SK-N-SH (cell line): ENCODE measurements at regions of chr1 and their contacts with region 1.

Region 1: DNA sequence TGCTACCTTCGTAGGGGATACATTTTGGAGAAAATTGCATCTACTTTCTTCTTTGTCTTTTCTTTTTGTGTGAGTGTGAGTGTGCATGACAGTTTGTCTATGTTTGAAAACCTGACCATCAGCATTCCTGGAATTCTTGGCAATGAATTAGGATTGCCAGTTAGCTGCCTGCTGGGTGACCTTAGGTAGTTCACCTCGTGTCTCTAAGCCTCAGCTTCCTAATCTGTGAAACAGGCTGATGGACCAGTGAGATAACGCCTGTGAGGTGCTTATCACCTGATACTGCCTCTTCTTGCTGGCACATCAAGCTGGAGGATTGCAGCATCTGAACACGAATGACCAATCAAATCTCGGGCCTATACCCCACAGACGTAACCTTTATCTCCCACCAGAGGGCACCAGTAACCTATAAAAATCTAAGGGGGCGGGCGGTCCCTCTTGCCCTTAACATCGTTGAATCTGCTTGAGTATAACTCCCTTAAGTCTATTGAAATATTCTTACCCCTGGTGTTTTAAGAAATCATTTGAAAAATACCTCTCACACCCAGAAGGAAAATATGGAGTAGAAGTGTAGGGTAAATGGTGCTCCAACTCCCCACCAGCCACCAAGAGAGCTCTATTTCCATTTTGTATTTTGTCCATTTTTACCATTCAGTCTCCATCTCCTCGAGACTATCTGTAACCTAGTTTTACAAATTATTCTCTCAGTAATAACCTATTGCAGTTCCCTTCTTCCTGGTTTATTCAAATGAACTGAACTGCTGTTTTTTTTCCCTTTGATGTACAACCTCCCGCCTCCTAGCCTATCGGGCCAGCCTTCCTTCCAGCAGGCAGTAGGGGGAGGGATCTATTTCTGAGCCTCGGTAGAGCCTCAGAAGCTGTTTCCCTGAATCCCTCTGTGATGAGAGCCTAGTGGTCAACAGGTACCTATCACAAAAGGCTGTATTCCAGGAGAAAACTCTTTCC is 49.7 kb downstream of the MDM4 start:
- DNase-seq: peak; percentile 89
- H3K4me3 ChIP-seq: no peak overlapping the region; a peak in 1 of 4 replicates
- H3K27ac ChIP-seq: no peak overlapping the region
- H3K4me1 ChIP-seq: no peaks in the 10 kb centered on the region; a peak in 1 of 4 replicates
- H3K27me3 ChIP-seq: no peaks in the 10 kb centered on the region
- CTCF ChIP-seq: peak; percentile 82
- EP300 ChIP-seq: no peak
- RAD21 ChIP-seq: peak; percentile 94

Region 2: GRCh38 chr1:204487256-204487615 is 78.7 kb before region 1 on chr1:
- CTCF ChIA-PET with region 1: no interaction called
- POLR2A ChIA-PET with region 1: no interaction called
- DNase-seq: no peak
- H3K4me3 ChIP-seq: no peak overlapping the region
- H3K27ac ChIP-seq: no peak overlapping the region
- H3K4me1 ChIP-seq: peaks cover 0 to under 1% of the 10 kb centered on the region in 2 experiments; a peak in 2 of 4 replicates
- H3K27me3 ChIP-seq: no peaks in the 10 kb centered on the region
- CTCF ChIP-seq: no peak
- EP300 ChIP-seq: no peak
- RAD21 ChIP-seq: no peak

Region 3: DNA sequence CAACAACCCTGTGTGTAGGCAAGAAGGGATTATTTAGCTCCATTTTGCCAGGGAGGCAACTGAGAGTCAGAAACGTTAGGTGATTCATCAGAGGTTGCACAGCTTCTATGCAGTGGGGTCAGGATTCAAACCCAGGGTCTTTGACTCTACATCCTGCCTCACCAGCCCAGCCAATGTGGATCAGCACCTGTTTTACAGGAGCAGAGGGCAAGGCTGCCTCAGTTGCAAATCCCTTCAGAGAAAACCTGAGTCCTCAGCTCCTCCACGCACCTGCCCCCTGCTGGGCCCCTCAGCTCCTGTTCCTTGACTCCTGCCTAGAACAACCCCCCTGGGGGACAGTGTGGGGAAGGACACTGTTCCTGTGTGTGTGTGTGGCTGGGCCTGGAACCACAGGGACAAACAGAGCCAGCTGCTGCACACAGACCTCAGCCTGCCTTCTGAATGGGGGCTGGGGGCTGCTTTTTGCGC is 58.0 kb after region 1 on chr1:
- CTCF ChIA-PET with region 1: interaction called, 27 read pairs
- POLR2A ChIA-PET with region 1: no interaction called
- DNase-seq: peak; percentile 72
- H3K4me3 ChIP-seq: no peak overlapping the region
- H3K27ac ChIP-seq: no peak overlapping the region
- H3K4me1 ChIP-seq: peaks cover 0 to 16% of the 10 kb centered on the region in 2 experiments; a peak in 1 of 4 replicates
- H3K27me3 ChIP-seq: no peaks in the 10 kb centered on the region
- CTCF ChIP-seq: no peak; the same call in 1 of the 2 replicates
- EP300 ChIP-seq: no peak
- RAD21 ChIP-seq: peak; percentile 26

Region 4: GRCh38 chr1:204746838-204747442 is 181.0 kb after region 1 on chr1:
- CTCF ChIA-PET with region 1: interaction called, 41 read pairs
- POLR2A ChIA-PET with region 1: no interaction called
- DNase-seq: peak; percentile 52
- H3K4me3 ChIP-seq: peak overlapping the region in 1 of 2 experiments; percentile 14; a peak in 1 of 4 replicates
- H3K27ac ChIP-seq: no peak overlapping the region
- H3K4me1 ChIP-seq: peaks cover 0 to 21% of the 10 kb centered on the region in 2 experiments; a peak in 2 of 4 replicates
- H3K27me3 ChIP-seq: peaks cover 22% of the 10 kb centered on the region; the same call in 1 of the 2 replicates
- CTCF ChIP-seq: peak; percentile 86
- EP300 ChIP-seq: no peak
- RAD21 ChIP-seq: peak; percentile 53

Region 5: GRCh38 chr1:204769997-204770396 is 204.1 kb after region 1 on chr1:
- CTCF ChIA-PET with region 1: interaction called, 16 read pairs
- POLR2A ChIA-PET with region 1: no interaction called
- DNase-seq: no peak
- H3K4me3 ChIP-seq: no peak overlapping the region
- H3K27ac ChIP-seq: no peak overlapping the region
- H3K4me1 ChIP-seq: no peaks in the 10 kb centered on the region
- H3K27me3 ChIP-seq: peaks cover 23% of the 10 kb centered on the region; the same call in 1 of the 2 replicates
- CTCF ChIP-seq: no peak
- EP300 ChIP-seq: no peak
- RAD21 ChIP-seq: no peak

Region 6: GRCh38 chr1:204791453-204792353 is 225.8 kb after region 1 on chr1:
- CTCF ChIA-PET with region 1: interaction called, 130 read pairs
- POLR2A ChIA-PET with region 1: no interaction called
- DNase-seq: peak; percentile 75
- H3K4me3 ChIP-seq: peak overlapping the region in 1 of 2 experiments; percentile 42; a peak in 1 of 4 replicates
- H3K27ac ChIP-seq: no peak overlapping the region
- H3K4me1 ChIP-seq: peaks cover 0 to 5% of the 10 kb centered on the region in 2 experiments; a peak in 2 of 4 replicates
- H3K27me3 ChIP-seq: peaks cover 26% of the 10 kb centered on the region; the same call in 1 of the 2 replicates
- CTCF ChIP-seq: peak; percentile 85
- EP300 ChIP-seq: no peak
- RAD21 ChIP-seq: peak; percentile 25; the same call in 1 of the 2 replicates

Region 7: DNA sequence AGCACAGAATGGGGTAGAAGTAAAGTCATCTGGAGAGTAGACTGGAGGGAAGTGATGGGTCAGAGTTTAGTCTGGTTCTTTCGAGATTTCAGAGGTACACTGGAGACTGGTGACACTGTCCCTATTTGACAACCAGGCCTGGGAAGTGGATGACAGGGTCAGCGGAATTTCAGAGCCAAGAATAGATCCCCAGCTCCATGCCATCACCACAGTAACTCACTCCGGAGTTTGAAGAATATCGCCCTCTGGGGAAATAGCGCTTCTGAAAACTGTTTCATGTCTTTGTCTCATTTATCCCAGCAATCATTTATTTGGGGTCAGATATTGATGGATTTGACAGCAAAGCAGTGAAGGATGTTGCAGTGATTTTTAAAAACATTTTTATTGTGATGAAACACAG is 297.1 kb after region 1 on chr1:
- CTCF ChIA-PET with region 1: no interaction called
- POLR2A ChIA-PET with region 1: no interaction called
- DNase-seq: no peak
- H3K4me3 ChIP-seq: no peak overlapping the region
- H3K27ac ChIP-seq: no peak overlapping the region
- H3K4me1 ChIP-seq: peaks cover 0 to 3% of the 10 kb centered on the region in 2 experiments; a peak in 1 of 4 replicates
- H3K27me3 ChIP-seq: no peaks in the 10 kb centered on the region
- CTCF ChIP-seq: no peak
- EP300 ChIP-seq: no peak
- RAD21 ChIP-seq: no peak